AG04449 (cell line): ENCODE measurements at regions of chr2 and their contacts with region 1.

Region 1: DNA sequence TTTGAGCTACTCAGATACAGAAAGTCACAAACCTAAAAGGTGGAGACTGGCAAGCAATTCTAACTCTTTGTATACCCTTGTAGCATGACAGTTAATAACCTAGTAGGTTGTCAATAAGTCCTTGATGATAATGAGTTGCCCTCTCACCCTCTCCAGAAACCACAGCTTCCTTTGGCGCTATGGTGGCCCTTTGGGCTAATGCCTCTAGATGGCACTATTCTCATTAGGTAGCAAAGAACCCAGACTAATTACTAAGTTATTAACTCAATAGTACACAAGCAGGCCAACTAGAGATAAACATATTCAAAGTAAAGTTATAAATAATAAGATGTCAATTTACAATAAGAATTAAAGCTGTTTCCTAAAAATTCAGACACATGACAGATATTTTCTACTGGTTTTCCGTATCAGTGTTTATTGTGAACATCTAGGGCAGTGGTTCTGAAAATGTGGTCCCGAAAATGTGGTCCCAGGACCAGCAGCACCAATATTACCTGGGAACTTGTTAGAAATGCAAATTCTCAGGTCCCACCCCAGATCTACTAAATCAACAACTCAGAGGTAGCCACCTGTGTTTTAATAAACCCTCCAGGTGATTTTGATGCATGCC is 41.1 kb downstream of the LDAH start:
- DNase-seq: no peak
- H3K4me3 ChIP-seq: no peak overlapping the region
- CTCF ChIP-seq: peak; percentile 52

Region 2: DNA sequence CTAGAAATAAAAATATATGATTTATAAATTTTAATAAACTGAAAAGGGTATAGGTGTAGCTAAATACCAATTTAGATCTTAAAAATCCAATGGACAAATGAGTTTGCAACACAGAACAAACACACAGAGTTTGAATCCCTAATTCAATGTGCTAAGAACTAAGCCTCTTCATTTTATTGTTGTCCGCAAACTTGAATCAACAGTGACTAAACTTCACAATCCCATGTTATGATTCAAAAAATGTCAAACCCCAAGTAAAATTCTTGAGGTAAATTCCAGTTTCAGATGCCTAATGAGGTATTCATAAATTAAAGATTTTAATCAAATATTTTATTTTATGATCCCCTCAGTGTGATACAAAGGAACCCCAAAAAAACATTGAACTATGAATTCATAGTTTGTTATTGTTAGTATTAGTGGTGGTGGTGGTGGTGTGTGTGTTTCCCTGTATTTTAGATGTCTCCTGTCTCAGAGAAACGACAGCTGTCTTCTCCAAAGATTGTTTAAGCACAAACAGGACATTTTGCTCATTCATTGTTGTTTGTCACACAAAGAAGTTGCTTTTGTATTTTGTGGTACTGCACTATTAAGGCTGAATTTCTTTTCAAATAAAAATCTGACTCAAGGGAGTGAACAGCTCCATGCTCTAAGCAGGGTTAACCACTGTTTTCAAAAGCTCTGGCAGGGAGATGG is 1683.1 kb before region 1 on chr2:
- CTCF ChIA-PET with region 1: no interaction called
- POLR2A ChIA-PET with region 1: no interaction called
- DNase-seq: no peak
- H3K4me3 ChIP-seq: no peak overlapping the region
- CTCF ChIP-seq: no peak

Region 3: GRCh38 chr2:20771299-20771698 is 10.5 kb before region 1 on chr2:
- CTCF ChIA-PET with region 1: interaction called, 32 read pairs
- POLR2A ChIA-PET with region 1: no interaction called
- DNase-seq: no peak
- H3K4me3 ChIP-seq: no peak overlapping the region
- CTCF ChIP-seq: no peak

Region 4: GRCh38 chr2:20796374-20796791 is 14.6 kb after region 1 on chr2:
- CTCF ChIA-PET with region 1: interaction called, 29 read pairs
- POLR2A ChIA-PET with region 1: no interaction called
- DNase-seq: peak; percentile 29
- H3K4me3 ChIP-seq: no peak overlapping the region
- CTCF ChIP-seq: no peak

Region 5: DNA sequence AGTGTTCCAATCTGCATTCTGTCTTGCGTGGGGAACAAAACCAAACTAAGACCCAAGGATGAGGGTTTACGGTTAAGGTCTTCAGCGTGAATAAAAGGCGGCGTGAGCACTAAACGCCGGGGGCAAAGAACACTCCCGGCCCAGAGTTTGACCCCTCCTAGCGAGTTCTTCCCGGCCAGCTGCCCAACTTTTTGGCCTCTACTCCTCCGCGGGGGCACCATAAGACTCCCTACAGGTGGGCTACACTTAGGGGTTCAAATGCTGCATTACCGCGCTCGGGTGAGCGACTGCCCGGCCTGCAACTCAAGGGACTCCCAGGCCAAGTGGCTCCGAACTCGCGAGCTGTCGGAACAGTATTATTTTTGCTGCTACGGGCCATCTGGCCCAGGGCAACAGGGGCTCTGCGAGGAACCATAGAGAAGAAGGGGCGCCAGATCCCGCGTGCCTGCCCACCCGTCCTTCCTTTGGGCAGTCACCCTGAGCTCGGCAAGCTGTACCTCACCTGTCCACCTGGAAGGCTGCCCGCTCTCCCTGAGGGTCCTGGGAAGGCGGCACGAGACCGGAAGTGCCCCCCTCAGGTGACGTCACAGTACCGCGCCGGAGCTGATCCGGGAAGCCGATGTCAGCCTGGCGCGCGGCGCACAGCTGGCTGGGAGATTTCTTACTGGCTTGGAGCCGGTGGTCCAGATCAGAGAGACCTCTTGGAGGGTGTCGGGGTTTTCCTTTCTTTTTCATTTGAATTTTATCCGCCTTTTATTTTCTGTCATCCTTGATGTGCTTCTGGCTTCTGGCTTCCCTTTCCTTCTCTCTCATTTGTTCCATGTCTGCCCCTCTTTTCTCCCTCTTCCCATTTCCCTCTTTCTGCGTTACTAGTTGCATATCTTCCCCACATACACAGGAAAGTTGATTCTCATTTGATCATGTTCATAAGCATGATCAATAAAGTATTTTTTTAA is 41.1 kb after region 1 on chr2 and contains the start of gene LDAH:
- CTCF ChIA-PET with region 1: interaction called, 10 read pairs
- POLR2A ChIA-PET with region 1: interaction called, 3 read pairs
- DNase-seq: peak; percentile 19
- H3K4me3 ChIP-seq: peak within 1 kb of the TSS; percentile 98
- CTCF ChIP-seq: no peak